Calu3 (cell line): ENCODE measurements at regions of chr11 and their contacts with region 1.

Region 1: GRCh38 chr11:749731-750130 is 2.5 kb downstream of the TALDO1 start:
- DNase-seq: no peak
- H3K4me3 Mint-ChIP-seq: peak overlapping the region; percentile 90
- H3K27ac Mint-ChIP-seq: peak overlapping the region; percentile 30
- H3K4me1 Mint-ChIP-seq: no peaks in the 10 kb centered on the region
- H3K27me3 Mint-ChIP-seq: no peaks in the 10 kb centered on the region
- CTCF ChIP-seq: no peak

Region 2: DNA sequence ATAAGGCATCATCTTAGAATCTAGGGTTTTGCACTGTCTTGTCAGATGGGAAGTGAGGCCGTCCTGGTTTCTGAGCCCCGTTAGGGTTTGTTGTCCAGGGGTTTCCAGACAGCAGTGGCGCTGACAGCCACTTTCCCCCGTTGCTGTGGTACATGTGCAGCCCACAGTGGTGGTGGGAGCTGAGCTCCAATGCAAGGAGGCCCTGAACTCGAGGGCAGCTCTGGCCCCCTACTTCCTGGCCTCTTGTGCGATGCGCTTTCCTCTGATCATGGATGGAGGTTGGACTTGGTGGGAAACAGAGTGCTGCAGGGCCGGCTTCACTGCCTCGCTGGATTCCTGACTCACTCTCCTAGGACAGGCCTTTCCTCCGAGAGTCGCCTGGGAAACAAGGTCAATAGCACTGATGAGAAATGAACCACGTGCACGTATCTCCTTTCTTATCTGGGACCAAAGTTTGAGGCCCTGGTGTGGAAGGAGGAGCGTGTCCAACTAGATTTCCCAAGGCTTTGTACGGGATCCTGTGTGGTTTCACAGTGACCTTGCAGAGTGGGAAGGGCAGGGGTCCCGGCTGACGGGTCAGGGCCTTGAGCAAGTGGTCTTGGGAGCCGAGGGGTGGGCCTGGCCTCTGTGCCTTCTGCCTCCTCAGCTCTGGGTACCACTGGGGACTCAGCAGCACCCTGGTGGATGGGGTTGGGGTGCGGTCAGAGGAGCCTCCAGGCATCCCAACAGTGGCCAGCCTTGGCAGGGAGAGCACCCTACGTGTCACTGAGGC is 169.7 kb before region 1 on chr11:
- CTCF ChIA-PET with region 1: no interaction called
- intact Hi-C with region 1: no loop called
- DNase-seq: no peak
- H3K4me3 Mint-ChIP-seq: no peak overlapping the region
- H3K27ac Mint-ChIP-seq: no peak overlapping the region
- H3K4me1 Mint-ChIP-seq: peaks cover 26% of the 10 kb centered on the region
- H3K27me3 Mint-ChIP-seq: peaks cover 4% of the 10 kb centered on the region
- CTCF ChIP-seq: no peak

Region 3: DNA sequence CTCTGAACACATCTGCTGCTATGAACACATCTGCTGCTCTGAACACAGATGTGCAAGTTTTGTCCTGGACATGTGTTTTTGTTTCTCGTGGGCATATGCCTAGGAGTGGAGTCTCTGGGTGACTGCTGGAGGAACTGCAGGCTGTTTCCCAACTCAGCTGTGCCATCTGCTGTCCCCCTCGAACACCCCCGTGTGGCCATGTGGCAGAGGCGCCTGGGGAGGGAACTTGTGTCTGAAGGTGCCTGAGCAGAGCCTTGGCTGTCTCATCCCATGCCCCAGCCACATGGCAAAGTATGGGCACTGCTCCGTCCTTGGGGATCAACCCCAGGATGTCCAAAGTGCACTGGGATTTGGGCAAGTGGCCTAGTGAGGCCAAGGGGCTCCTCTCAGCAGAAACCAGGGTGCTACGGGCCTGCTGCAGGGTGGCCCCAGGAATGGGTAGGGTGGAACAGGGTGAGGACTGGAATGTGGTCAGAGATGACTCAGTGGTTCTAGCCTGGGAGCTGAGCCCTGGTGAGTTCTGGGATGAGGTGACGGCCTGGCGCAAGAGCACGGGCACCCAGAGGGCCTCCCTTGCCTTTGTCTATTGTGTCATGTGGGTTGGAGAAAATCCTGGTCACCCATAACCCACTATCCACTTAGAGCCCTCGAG is 12.8 kb after region 1 on chr11:
- CTCF ChIA-PET with region 1: interaction called, 14 read pairs
- intact Hi-C with region 1: no loop called
- DNase-seq: peak; percentile 77
- H3K4me3 Mint-ChIP-seq: peak overlapping the region; percentile 52
- H3K27ac Mint-ChIP-seq: peak overlapping the region; percentile 80
- H3K4me1 Mint-ChIP-seq: peaks cover 22% of the 10 kb centered on the region
- H3K27me3 Mint-ChIP-seq: no peaks in the 10 kb centered on the region
- CTCF ChIP-seq: peak; percentile 57

Region 4: GRCh38 chr11:933142-933851 is 183.6 kb after region 1 on chr11:
- CTCF ChIA-PET with region 1: no interaction called
- intact Hi-C with region 1: no loop called
- DNase-seq: no peak
- H3K4me3 Mint-ChIP-seq: no peak overlapping the region
- H3K27ac Mint-ChIP-seq: no peak overlapping the region
- H3K4me1 Mint-ChIP-seq: peaks cover 16% of the 10 kb centered on the region
- H3K27me3 Mint-ChIP-seq: no peaks in the 10 kb centered on the region
- CTCF ChIP-seq: no peak

Region 5: GRCh38 chr11:1618231-1618630 is 868.5 kb after region 1 on chr11:
- CTCF ChIA-PET with region 1: no interaction called
- intact Hi-C with region 1: no loop called
- DNase-seq: no peak
- H3K4me3 Mint-ChIP-seq: no peak overlapping the region
- H3K27ac Mint-ChIP-seq: no peak overlapping the region
- H3K4me1 Mint-ChIP-seq: no peaks in the 10 kb centered on the region
- H3K27me3 Mint-ChIP-seq: peaks cover 89% of the 10 kb centered on the region
- CTCF ChIP-seq: no peak